ENCODE measurements at regions of chr9 and their contacts with region 1.

Region 1: GRCh38 chr9:81389569-81389993 is 299.8 kb downstream of the TLE1 start:
- DNase-seq: peak; percentile 82

Region 2: DNA sequence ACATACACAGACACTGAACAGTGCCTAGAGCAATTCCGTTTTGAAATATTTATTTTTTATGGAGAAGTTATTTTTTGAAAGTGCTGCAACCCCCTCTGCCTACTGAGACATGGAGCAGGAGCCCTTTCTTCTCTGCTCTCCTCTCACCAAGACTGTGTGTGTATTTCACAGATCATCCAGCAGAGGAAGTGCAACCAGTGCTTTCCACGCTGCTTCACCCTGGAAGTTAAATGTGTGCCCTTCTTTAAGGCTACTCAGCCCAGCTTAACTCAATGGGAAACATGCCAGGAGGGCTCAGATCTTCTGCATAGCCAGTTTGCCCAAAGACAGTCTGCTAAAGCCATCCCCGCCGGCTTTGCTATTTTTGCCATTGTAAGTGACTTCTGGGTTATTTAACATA is 306.5 kb before region 1 on chr9:
- intact Hi-C with region 1: loop called in 1 of 2 experiments (anchors 10 kb)
- DNase-seq: no peak